H1 (cell line): ENCODE measurements at regions of chr1 and their contacts with region 1.

Region 1: GRCh38 chr1:27111626-27112573 is 43.0 kb downstream of the SLC9A1 start:
- DNase-seq: no peak
- H3K4me3 ChIP-seq: no peak overlapping the region
- H3K27ac ChIP-seq: no peak overlapping the region
- H3K4me1 ChIP-seq: no peaks in the 10 kb centered on the region
- H3K27me3 ChIP-seq: no peaks in the 10 kb centered on the region
- CTCF ChIP-seq: peak in 1 of 3 experiments; percentile 20; a peak in 2 of 4 replicates
- EP300 ChIP-seq: no peak
- POLR2A ChIP-seq: no peak
- RAD21 ChIP-seq: peak in 1 of 2 experiments; percentile 43; a peak in 1 of 4 replicates

Region 2: DNA sequence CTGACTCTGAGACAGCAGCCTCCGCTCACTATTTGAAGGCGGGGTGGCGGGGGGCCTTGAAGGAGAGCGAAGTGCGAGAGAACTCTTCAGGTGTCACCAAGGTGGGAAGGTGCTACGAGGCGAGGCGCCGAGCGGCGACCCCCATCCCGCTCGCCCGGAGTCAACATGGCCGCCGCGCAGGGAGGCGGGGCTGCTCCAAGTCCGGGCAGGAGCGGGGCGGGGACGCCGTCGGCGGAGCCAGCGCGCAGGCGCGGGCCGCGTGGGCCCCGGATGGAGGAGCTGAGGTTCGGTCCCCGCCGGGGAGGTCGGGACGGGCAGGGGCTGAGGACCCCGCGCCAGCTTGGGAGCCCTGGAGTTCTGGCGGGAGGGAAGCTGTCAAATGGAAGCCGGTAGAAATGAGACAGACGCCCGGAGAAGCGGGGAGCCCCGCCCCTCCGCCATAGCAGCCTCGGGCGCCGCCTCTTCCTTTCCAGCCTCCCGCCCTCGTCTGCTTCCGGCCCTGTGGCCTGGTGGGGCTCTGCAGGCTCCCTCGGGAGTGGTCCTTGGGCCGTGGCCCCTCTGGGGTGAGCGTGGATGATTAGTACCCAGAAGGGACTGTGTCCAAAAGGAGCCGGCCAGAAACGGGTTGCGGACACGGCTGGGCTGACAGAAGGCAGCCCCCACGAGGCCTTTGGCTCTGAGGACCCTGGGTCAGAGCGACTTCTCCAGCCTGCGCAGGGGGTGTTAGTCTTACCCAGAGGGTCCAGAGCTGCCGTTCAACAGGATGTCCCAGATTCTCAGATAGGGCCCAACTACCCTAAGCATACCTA is 324.0 kb before region 1 on chr1 and contains the start of gene PIGV:
- CTCF ChIA-PET with region 1: no interaction called
- POLR2A ChIA-PET with region 1: no interaction called
- DNase-seq: peak in 1 of 2 experiments; percentile 95
- H3K4me3 ChIP-seq: peak within 1 kb of the TSS; percentile 63 to 84 (median 73)
- H3K27ac ChIP-seq: peak within 1 kb of the TSS; percentile 81
- H3K4me1 ChIP-seq: peaks cover 7 to 18% (median 12%) of the 10 kb centered on the region in 4 experiments; a peak in 6 of 7 replicates
- H3K27me3 ChIP-seq: no peaks in the 10 kb centered on the region
- CTCF ChIP-seq: no peak
- EP300 ChIP-seq: no peak
- POLR2A ChIP-seq: peak; percentile 70 to 87
- RAD21 ChIP-seq: no peak
- total RNA-seq, gene PIGV: 8.5 and 9.3 TPM in 2 replicates

Region 3: DNA sequence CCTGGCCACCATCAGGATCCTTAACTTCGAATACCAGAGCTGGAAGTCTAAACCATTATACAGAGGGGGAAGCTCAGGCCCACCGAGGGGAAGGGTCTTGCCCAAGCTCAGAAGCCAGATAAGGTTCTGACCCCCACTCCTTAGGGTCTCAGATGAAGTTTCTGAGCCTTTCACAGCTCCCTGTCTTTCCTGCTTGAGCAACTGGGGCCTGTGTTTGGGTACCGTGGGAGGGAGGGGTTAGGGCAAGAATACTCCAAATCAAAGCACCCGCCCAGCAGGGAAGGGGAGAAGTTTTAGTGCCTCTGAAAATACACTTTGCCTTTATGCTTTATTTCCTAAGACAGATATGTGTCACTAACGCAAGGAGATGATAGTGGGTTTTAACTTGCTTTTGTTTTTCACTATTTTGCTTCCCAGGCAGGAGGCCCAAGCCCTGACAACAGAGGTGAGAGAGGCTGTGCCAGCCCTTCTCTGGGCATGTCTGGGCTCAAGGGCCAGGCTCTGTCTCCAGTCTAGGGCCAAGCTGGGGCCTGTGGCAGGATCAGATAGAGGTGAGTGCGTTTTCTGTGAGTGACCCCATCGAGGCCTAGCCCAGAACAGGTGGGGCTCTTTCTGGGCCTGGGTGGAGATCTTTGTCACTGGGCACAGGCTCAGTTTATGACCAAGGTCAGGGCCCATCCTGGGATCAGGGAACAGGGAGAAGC is 78.7 kb before region 1 on chr1:
- CTCF ChIA-PET with region 1: no interaction called
- POLR2A ChIA-PET with region 1: no interaction called
- DNase-seq: no peak
- H3K4me3 ChIP-seq: no peak overlapping the region
- H3K27ac ChIP-seq: no peak overlapping the region
- H3K4me1 ChIP-seq: peaks cover 9 to 25% (median 14%) of the 10 kb centered on the region in 4 experiments
- H3K27me3 ChIP-seq: no peaks in the 10 kb centered on the region
- CTCF ChIP-seq: no peak
- EP300 ChIP-seq: no peak
- POLR2A ChIP-seq: no peak
- RAD21 ChIP-seq: no peak

Region 4: GRCh38 chr1:27097484-27097917 is 14.4 kb before region 1 on chr1:
- CTCF ChIA-PET with region 1: interaction called, 90 read pairs
- POLR2A ChIA-PET with region 1: interaction called, 4 read pairs
- DNase-seq: peak; percentile 38 to 93
- H3K4me3 ChIP-seq: no peak overlapping the region
- H3K27ac ChIP-seq: no peak overlapping the region
- H3K4me1 ChIP-seq: peaks cover 0 to 20% (median 13%) of the 10 kb centered on the region in 4 experiments; a peak in 6 of 7 replicates
- H3K27me3 ChIP-seq: no peaks in the 10 kb centered on the region
- CTCF ChIP-seq: peak in 2 of 3 experiments; percentile 96; a peak in 3 of 4 replicates
- EP300 ChIP-seq: no peak
- POLR2A ChIP-seq: no peak
- RAD21 ChIP-seq: peak; percentile 98 to 99

Region 5: DNA sequence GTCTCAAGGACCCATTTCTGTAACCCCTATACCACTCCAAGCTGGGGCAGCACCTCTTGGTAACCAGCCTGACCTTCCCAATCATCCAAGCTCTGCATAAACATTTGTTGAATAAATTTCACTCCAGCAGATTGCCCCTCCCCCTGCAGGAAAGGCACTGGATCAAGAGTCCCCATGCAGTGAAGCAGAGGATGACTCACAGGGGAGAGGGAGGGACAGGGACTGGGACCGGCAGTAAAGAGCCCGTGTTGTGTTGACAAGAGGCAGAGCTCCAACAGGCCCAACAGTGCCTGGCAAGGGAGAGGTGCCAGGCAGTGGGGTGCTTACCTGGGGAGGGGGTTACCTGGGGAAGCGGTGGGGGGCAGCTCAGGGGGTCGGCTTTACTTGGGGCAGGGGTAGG is 10.8 kb after region 1 on chr1:
- CTCF ChIA-PET with region 1: interaction called, 114 read pairs
- POLR2A ChIA-PET with region 1: interaction called, 4 read pairs
- DNase-seq: no peak
- H3K4me3 ChIP-seq: no peak overlapping the region
- H3K27ac ChIP-seq: no peak overlapping the region
- H3K4me1 ChIP-seq: peaks cover 0 to 9% (median 3%) of the 10 kb centered on the region in 4 experiments; a peak in 3 of 7 replicates
- H3K27me3 ChIP-seq: no peaks in the 10 kb centered on the region
- CTCF ChIP-seq: no peak
- EP300 ChIP-seq: no peak
- POLR2A ChIP-seq: no peak
- RAD21 ChIP-seq: no peak

Region 6: GRCh38 chr1:27154991-27155781 is 43.3 kb after region 1 on chr1 and contains the start of gene SLC9A1:
- CTCF ChIA-PET with region 1: interaction called, 8 read pairs
- POLR2A ChIA-PET with region 1: interaction called, 11 read pairs
- DNase-seq: peak; percentile 73 to 99
- H3K4me3 ChIP-seq: peak within 1 kb of the TSS; percentile 52 to 82 (median 70)
- H3K27ac ChIP-seq: peak within 1 kb of the TSS; percentile 26; the same call in 1 of the 2 replicates
- H3K4me1 ChIP-seq: peaks cover 2 to 15% (median 11%) of the 10 kb centered on the region in 4 experiments
- H3K27me3 ChIP-seq: no peaks in the 10 kb centered on the region; a peak in 1 of 7 replicates
- CTCF ChIP-seq: peak; percentile 77 to 89 (median 83)
- EP300 ChIP-seq: peak in 1 of 2 experiments; percentile 80; a peak in 1 of 3 replicates
- POLR2A ChIP-seq: peak; percentile 99 to 100
- RAD21 ChIP-seq: peak in 1 of 2 experiments; percentile 30; a peak in 2 of 4 replicates
- total RNA-seq, gene SLC9A1: 25.1 and 25.5 TPM in 2 replicates

Region 7: DNA sequence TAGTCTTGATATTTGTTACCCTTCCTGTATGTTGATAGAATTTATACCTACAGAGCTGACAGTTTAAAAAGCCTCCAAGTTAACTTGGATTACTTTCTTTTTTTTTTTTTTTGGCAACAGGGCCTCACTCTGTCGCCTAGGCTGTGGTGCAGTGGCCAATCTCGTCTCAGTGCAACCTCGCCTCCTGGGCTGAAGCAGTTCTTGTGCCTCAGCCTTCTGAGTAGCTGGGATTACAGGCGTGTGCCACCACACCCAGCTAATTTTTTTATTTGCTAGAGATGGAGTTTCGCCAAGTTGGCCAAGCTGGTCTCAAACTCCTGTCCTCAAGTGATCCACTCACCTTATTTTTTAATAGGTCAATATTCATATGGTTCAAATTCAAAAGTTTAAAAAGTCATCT is 155.3 kb after region 1 on chr1:
- CTCF ChIA-PET with region 1: interaction called, 11 read pairs
- POLR2A ChIA-PET with region 1: no interaction called
- DNase-seq: no peak
- H3K4me3 ChIP-seq: no peak overlapping the region
- H3K27ac ChIP-seq: no peak overlapping the region
- H3K4me1 ChIP-seq: no peaks in the 10 kb centered on the region
- H3K27me3 ChIP-seq: no peaks in the 10 kb centered on the region
- CTCF ChIP-seq: no peak
- EP300 ChIP-seq: no peak
- POLR2A ChIP-seq: no peak
- RAD21 ChIP-seq: no peak

Region 8: DNA sequence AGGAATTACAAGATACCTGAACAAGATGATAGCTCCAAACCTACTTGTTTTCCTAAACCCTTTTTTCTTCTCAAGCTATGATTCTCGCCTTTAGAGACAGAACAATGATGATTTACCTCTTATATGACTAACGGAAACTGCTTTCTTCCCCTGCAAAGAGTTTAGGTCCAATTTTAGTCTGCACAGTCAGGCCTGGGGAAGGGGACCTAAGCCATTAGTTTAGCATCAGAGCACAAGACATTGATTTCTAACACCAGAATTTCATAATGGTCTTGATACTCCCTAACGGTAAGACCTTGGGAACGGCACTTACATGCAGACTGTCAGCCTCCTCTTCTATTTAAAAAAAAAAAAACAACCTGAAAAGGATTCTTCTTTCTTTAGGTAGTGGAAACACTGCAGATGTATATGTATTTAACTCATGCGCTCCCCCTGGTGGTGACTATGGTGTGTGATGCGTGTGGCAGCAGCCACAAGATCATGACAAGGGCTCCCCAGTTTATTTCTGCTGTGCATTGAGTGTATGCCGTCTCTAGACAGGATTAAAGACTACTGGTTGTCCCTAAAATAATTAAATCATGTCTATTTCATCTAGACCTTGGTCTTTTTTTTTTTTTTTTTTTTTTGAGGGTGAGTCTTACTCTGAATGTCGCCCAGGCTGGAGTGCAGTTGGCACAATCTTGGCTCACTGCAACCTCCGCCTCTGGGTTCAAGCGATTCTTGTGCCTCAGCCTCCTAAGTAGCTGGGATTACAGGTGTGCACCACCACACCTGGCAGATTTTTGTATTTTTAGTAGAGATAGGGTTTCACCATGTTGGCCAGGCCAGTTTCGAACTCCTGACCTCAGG is 172.7 kb after region 1 on chr1:
- CTCF ChIA-PET with region 1: interaction called, 22 read pairs
- POLR2A ChIA-PET with region 1: no interaction called
- DNase-seq: peak in 1 of 2 experiments; percentile 90
- H3K4me3 ChIP-seq: no peak overlapping the region
- H3K27ac ChIP-seq: no peak overlapping the region
- H3K4me1 ChIP-seq: no peaks in the 10 kb centered on the region
- H3K27me3 ChIP-seq: no peaks in the 10 kb centered on the region
- CTCF ChIP-seq: peak; percentile 76 to 81 (median 77)
- EP300 ChIP-seq: no peak
- POLR2A ChIP-seq: no peak
- RAD21 ChIP-seq: peak; percentile 74 to 75

Region 9: GRCh38 chr1:27525296-27526272 is 413.7 kb after region 1 on chr1:
- CTCF ChIA-PET with region 1: no interaction called
- POLR2A ChIA-PET with region 1: no interaction called
- DNase-seq: peak in 1 of 2 experiments; percentile 81
- H3K4me3 ChIP-seq: peak overlapping the region in 3 of 4 experiments; percentile 15 to 42 (median 34); a peak in 4 of 8 replicates
- H3K27ac ChIP-seq: 0 out of 2 replicates have a peak overlapping the region, but pooled peaks have one; percentile 43
- H3K4me1 ChIP-seq: peaks cover 12 to 56% (median 42%) of the 10 kb centered on the region in 4 experiments
- H3K27me3 ChIP-seq: no peaks in the 10 kb centered on the region
- CTCF ChIP-seq: no peak
- EP300 ChIP-seq: no peak
- POLR2A ChIP-seq: no peak
- RAD21 ChIP-seq: no peak; a peak in 1 of 4 replicates